Naive thymus-derived CD4-positive, alpha-beta T cell (primary cell): ENCODE measurements at regions of chr9 and their contacts with region 1.

Region 1: DNA sequence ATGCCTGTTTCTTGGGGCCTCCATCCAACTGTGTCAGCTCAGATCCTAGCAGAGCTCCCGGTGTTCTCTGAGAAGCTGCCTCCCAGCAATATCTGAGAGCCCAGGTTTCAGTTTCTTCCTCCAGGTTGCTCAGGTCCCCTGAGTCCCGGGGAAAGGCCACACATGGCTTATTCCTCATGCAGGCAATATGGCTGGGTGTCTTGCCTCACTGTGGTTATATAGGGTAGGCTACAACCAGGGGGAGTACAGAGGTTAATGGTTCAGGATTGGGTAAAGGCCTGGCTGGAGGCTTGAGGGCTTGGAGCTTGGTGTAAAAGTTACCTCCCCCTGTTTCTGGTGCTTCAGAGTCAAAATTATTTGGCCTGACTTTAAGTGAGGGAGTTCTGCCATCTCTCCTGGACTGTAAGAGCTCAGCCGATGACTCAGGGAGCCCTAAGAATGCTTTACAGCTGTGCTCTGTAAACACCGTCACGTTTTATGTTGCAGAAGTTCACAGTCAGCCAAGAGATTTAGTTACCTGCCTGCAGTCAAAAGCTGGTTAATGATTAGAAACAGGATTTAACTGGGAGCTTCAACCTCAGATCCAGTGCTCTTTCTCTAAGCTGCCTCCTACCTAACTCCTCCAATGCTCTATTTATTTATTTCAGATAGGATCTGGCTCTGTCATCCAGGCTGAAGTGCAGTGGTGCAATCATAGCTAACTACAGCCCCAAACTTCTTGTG is 24.3 kb upstream of the UBAP2 start:
- DNase-seq: no peak
- ATAC-seq: no peak
- H3K4me3 ChIP-seq: no peak overlapping the region
- H3K4me3 Mint-ChIP-seq: no peak overlapping the region
- H3K27ac ChIP-seq: no peak overlapping the region
- H3K27ac Mint-ChIP-seq: peak overlapping the region in 3 of 9 donors; percentile 28 to 62 (median 45)
- H3K4me1 ChIP-seq: no peaks in the 10 kb centered on the region
- H3K4me1 Mint-ChIP-seq: peaks cover 0 to 12% (median 0%) of the 10 kb centered on the region in 7 donors
- H3K27me3 ChIP-seq: no peaks in the 10 kb centered on the region
- H3K27me3 Mint-ChIP-seq: no peaks in the 10 kb centered on the region

Region 2: DNA sequence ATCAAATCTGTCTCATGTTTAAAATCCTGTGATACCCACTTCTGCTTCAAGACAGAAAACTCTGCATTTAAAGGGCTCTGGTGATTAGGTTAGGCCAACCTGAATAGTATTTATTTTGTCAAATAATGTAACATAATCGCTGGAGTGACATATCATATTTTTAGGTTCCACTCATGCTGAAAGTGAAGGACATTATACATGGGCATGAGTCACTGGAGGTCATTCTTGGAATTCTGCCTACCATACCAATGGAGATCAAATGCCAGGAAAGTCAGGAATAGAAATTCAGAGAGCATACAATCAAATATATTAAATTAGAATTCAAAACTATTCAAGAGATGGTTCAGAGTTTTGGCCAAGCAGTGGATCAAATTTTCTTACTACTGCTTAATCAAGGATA is 374.8 kb before region 1 on chr9:
- CTCF ChIA-PET with region 1: no interaction called
- POLR2A ChIA-PET with region 1: no interaction called
- intact Hi-C with region 1: no loop called
- DNase-seq: no peak
- ATAC-seq: no peak
- H3K4me3 ChIP-seq: no peak overlapping the region
- H3K4me3 Mint-ChIP-seq: no peak overlapping the region
- H3K27ac ChIP-seq: no peak overlapping the region
- H3K27ac Mint-ChIP-seq: no peak overlapping the region
- H3K4me1 ChIP-seq: no peaks in the 10 kb centered on the region
- H3K4me1 Mint-ChIP-seq: peaks cover 0 to 7% (median 0%) of the 10 kb centered on the region in 7 donors
- H3K27me3 ChIP-seq: no peaks in the 10 kb centered on the region
- H3K27me3 Mint-ChIP-seq: peaks cover 0 to 45% (median 28%) of the 10 kb centered on the region in 5 donors

Region 3: GRCh38 chr9:33924978-33925797 is 147.8 kb before region 1 on chr9:
- CTCF ChIA-PET with region 1: no interaction called
- POLR2A ChIA-PET with region 1: no interaction called
- intact Hi-C with region 1: loop called in 1 of 2 experiments (anchors 5 kb)
- DNase-seq: peak in 3 of 9 donors; percentile 11 to 21 (median 15)
- ATAC-seq: peak; percentile 19
- H3K4me3 ChIP-seq: no peak overlapping the region
- H3K4me3 Mint-ChIP-seq: no peak overlapping the region
- H3K27ac ChIP-seq: no peak overlapping the region
- H3K27ac Mint-ChIP-seq: peak overlapping the region in 8 of 9 donors; percentile 30 to 82 (median 59)
- H3K4me1 ChIP-seq: no peaks in the 10 kb centered on the region
- H3K4me1 Mint-ChIP-seq: peaks cover 0 to 2% (median 0%) of the 10 kb centered on the region in 7 donors
- H3K27me3 ChIP-seq: no peaks in the 10 kb centered on the region
- H3K27me3 Mint-ChIP-seq: no peaks in the 10 kb centered on the region